CD8-positive, alpha-beta memory T cell (primary cell): ENCODE measurements at regions of chr7 and their contacts with region 1.

Region 1: GRCh38 chr7:100428967-100429636 is 529 bp upstream of the MEPCE start:
- DNase-seq: peak; percentile 100
- H3K4me3 ChIP-seq: peak overlapping the region; percentile 96
- H3K4me3 Mint-ChIP-seq: peak overlapping the region; percentile 96 to 100 (median 98)
- H3K27ac ChIP-seq: peak overlapping the region; percentile 100
- H3K27ac Mint-ChIP-seq: peak overlapping the region; percentile 94 to 100 (median 100)
- H3K4me1 ChIP-seq: peaks cover 34% of the 10 kb centered on the region
- H3K4me1 Mint-ChIP-seq: peaks cover 31 to 56% (median 35%) of the 10 kb centered on the region in 3 donors
- H3K27me3 ChIP-seq: no peaks in the 10 kb centered on the region
- H3K27me3 Mint-ChIP-seq: peaks cover 0 to 13% of the 10 kb centered on the region in 2 donors

Region 2: GRCh38 chr7:99531354-99531765 is 897.7 kb before region 1 on chr7:
- CTCF ChIA-PET with region 1: no interaction called
- POLR2A ChIA-PET with region 1: interaction called, 10 read pairs
- DNase-seq: no peak
- H3K4me3 ChIP-seq: no peak overlapping the region
- H3K4me3 Mint-ChIP-seq: no peak overlapping the region
- H3K27ac ChIP-seq: no peak overlapping the region
- H3K27ac Mint-ChIP-seq: no peak overlapping the region
- H3K4me1 ChIP-seq: no peaks in the 10 kb centered on the region
- H3K4me1 Mint-ChIP-seq: no peaks in the 10 kb centered on the region
- H3K27me3 ChIP-seq: no peaks in the 10 kb centered on the region
- H3K27me3 Mint-ChIP-seq: no peaks in the 10 kb centered on the region

Region 3: DNA sequence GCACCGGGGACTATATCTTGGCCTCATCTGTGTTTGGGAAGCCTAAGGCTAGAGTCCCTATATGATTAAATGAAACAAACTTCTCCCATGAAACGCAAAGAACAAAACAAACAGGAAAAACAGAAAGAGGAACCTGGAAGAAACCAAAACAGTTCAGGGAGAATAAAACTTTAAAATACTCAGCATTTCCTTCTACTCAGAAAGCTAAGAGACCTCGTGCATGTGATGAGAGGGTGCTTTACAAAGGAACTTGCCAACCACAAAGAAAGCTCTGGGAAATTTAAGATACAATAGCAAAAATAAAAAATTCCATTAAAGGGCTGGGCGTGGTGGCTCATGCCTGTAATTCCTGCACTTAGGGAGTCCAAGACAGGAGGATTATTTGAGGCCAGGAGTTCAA is 48.9 kb before region 1 on chr7:
- CTCF ChIA-PET with region 1: no interaction called
- POLR2A ChIA-PET with region 1: no interaction called
- DNase-seq: no peak
- H3K4me3 ChIP-seq: no peak overlapping the region
- H3K4me3 Mint-ChIP-seq: no peak overlapping the region
- H3K27ac ChIP-seq: no peak overlapping the region
- H3K27ac Mint-ChIP-seq: no peak overlapping the region
- H3K4me1 ChIP-seq: no peaks in the 10 kb centered on the region
- H3K4me1 Mint-ChIP-seq: peaks cover under 1 to 11% (median 3%) of the 10 kb centered on the region in 3 donors
- H3K27me3 ChIP-seq: no peaks in the 10 kb centered on the region
- H3K27me3 Mint-ChIP-seq: peaks cover 0 to 3% of the 10 kb centered on the region in 2 donors

Region 4: DNA sequence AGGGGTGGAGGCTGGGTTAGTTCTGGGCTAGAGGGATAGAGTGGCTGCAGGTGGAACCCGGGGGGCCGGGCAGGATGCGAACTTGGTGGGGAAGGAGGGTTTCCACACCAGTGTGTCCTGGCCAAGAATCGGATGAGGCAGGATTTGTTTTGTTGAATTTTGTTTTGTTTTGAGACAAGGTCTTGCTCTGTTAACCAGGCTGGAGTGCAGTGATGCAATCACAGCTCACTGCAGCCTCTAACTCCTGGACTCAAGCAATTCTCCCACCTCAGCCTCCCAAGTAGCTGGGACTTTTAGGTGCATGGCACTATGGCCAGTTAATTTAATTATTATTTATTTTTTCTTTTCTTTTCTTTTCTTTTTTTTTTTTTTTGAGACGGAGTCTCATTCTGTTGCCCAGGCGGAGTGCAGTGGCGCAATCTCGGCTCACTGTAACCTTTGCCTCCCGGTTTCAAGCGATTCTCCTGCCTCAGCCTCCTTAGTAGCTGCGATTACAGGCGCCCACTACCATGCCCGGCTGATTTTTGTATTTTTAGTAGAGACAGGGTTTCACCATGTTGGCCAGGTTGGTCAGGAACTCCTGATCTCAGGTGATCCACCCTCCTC is 20.2 kb after region 1 on chr7:
- CTCF ChIA-PET with region 1: interaction called, 4 read pairs
- POLR2A ChIA-PET with region 1: interaction called, 12 read pairs
- DNase-seq: no peak
- H3K4me3 ChIP-seq: no peak overlapping the region
- H3K4me3 Mint-ChIP-seq: peak overlapping the region in 1 of 7 donors; percentile 22
- H3K27ac ChIP-seq: no peak overlapping the region
- H3K27ac Mint-ChIP-seq: peak overlapping the region in 1 of 8 donors; percentile 52
- H3K4me1 ChIP-seq: peaks cover 15% of the 10 kb centered on the region
- H3K4me1 Mint-ChIP-seq: peaks cover 0 to 14% (median 7%) of the 10 kb centered on the region in 3 donors
- H3K27me3 ChIP-seq: no peaks in the 10 kb centered on the region
- H3K27me3 Mint-ChIP-seq: no peaks in the 10 kb centered on the region

Region 5: DNA sequence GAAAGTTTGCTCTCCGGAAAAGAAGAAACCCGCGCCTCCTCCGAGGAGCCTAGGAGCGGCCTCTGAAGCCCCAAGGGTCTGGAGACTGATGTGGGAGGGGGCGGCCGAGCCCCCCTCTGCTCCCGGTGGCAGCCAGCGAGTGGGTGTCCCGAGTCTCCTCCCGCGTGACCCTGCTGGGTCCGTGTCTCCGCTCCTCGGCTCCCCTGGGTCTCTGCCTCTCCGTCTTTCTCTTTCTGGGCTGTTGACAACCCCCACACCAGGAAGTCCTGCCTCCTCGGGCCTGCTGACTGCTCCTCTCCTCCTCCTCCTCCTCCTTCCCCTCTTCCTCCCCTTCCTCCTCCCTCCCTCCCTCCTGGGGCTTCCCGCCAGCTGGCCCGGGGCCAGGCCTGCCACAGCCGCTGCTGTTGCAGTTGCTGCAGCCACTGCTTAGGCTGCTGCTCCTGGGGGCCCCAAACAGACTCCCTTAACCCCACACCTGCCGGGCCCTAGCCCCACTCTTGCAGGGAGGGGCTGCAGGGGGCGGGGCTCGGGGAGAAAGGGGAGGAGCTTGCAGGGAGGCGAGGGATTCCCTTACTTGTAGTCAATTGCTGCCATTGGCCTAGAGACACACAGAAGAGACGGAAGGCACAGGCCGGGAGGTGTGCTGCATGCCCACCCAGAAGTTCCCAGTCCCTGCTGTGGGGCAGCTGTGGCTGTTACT is 50.0 kb after region 1 on chr7 and contains the start of gene TSC22D4:
- CTCF ChIA-PET with region 1: interaction called, 3 read pairs
- POLR2A ChIA-PET with region 1: interaction called, 15 read pairs
- DNase-seq: peak; percentile 88 to 97 (median 93)
- H3K4me3 ChIP-seq: peak within 1 kb of the TSS; percentile 66
- H3K4me3 Mint-ChIP-seq: peak within 1 kb of the TSS; percentile 93 to 100 (median 99)
- H3K27ac ChIP-seq: peak within 1 kb of the TSS; percentile 90
- H3K27ac Mint-ChIP-seq: peak within 1 kb of the TSS; percentile 87 to 100 (median 94)
- H3K4me1 ChIP-seq: peaks cover 50% of the 10 kb centered on the region
- H3K4me1 Mint-ChIP-seq: peaks cover 31 to 50% (median 47%) of the 10 kb centered on the region in 3 donors
- H3K27me3 ChIP-seq: no peaks in the 10 kb centered on the region
- H3K27me3 Mint-ChIP-seq: peaks cover 0 to 6% of the 10 kb centered on the region in 2 donors
- total RNA-seq, gene TSC22D4: 96.2 to 99.1 TPM